ENCODE measurements at regions of chr1 and their contacts with region 1.

Region 1: GRCh38 chr1:92960395-92961130 is 699 bp downstream of the DIPK1A start:
- DNase-seq: peak; percentile 41
- H3K4me3 ChIP-seq: peak overlapping the region; percentile 79
- CTCF ChIP-seq: peak; percentile 75

Region 2: DNA sequence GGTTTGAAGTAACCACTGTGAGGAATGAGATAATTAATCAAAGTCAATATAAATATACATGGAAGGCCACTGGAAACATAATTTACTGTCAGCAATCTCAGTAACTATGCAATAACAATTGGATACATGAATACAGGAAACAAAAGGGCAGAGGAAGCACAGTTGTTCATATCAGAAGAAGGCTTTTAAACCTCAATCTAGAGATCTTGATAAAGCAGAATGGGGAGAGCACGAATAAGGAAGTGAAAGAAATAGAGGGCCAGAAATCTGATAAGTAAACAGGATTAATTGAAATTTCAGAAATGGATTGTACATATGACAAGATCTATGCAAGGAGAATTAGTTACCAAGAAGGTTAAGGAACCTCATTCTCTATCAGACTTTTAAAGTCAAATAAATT is 268.6 kb before region 1 on chr1:
- CTCF ChIA-PET with region 1: no interaction called
- POLR2A ChIA-PET with region 1: no interaction called
- DNase-seq: no peak
- H3K4me3 ChIP-seq: no peak overlapping the region
- CTCF ChIP-seq: no peak

Region 3: GRCh38 chr1:92940541-92940940 is 20.0 kb before region 1 on chr1:
- CTCF ChIA-PET with region 1: interaction called, 14 read pairs
- POLR2A ChIA-PET with region 1: interaction called, 3 read pairs
- DNase-seq: peak; percentile 57
- H3K4me3 ChIP-seq: no peak overlapping the region
- CTCF ChIP-seq: no peak

Region 4: GRCh38 chr1:92975551-92976232 is 15.1 kb after region 1 on chr1:
- CTCF ChIA-PET with region 1: interaction called, 42 read pairs
- POLR2A ChIA-PET with region 1: no interaction called
- DNase-seq: no peak
- H3K4me3 ChIP-seq: no peak overlapping the region
- CTCF ChIP-seq: no peak

Region 5: GRCh38 chr1:93093332-93094006 is 132.9 kb after region 1 on chr1:
- CTCF ChIA-PET with region 1: no interaction called
- POLR2A ChIA-PET with region 1: no interaction called
- DNase-seq: no peak
- H3K4me3 ChIP-seq: no peak overlapping the region
- CTCF ChIP-seq: no peak

Measured in AG04449 (cell line).